ENCODE measurements at regions of chr2 and their contacts with region 1.

Region 1: DNA sequence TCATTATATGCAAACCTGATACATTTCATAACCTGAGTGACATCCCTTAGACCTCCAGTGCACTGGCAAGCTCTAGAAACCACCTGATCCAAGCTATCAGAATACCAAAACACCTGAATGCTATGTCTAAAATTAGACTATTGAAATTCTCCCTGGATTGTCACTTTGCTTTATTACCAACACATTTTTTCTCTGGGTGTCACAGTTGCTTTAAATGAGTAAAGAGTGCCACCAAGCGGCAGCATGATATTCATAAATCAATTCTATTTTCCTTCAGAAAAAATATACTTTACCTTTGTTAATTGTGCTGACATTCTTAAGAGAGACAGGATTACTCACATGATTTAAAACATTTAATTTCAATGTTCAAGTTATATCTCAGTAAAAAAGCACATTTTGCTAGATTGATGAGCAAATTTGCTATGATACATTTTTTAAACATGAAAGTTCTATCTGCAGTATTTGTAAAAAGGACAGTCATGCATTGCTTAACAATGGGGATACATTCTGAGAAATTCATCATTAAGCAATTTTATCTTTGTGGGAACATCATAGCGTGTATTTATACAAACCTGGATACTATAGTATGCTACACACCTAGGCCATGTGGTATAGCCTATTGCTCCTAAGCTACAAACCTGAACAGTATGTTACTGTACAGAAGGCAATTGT is 338.4 kb upstream of the SLC39A10 start:
- DNase-seq: peak; percentile 60
- ATAC-seq: peak; percentile 57
- H3K4me3 Mint-ChIP-seq: no peak overlapping the region
- H3K27ac Mint-ChIP-seq: no peak overlapping the region
- H3K4me1 Mint-ChIP-seq: peaks cover 10% of the 10 kb centered on the region
- H3K27me3 Mint-ChIP-seq: no peaks in the 10 kb centered on the region

Region 2: GRCh38 chr2:193695367-193695766 is 1623.2 kb before region 1 on chr2:
- CTCF ChIA-PET with region 1: no interaction called
- POLR2A ChIA-PET with region 1: no interaction called
- intact Hi-C with region 1: loop called in 1 of 2 experiments (anchors 10 kb)
- DNase-seq: no peak
- ATAC-seq: no peak
- H3K4me3 Mint-ChIP-seq: no peak overlapping the region
- H3K27ac Mint-ChIP-seq: no peak overlapping the region
- H3K4me1 Mint-ChIP-seq: no peaks in the 10 kb centered on the region
- H3K27me3 Mint-ChIP-seq: peaks cover 2% of the 10 kb centered on the region

Region 3: GRCh38 chr2:194545978-194546377 is 772.6 kb before region 1 on chr2:
- CTCF ChIA-PET with region 1: no interaction called
- POLR2A ChIA-PET with region 1: no interaction called
- intact Hi-C with region 1: loop called in 1 of 2 experiments (anchors 5 kb)
- DNase-seq: no peak
- ATAC-seq: no peak
- H3K4me3 Mint-ChIP-seq: no peak overlapping the region
- H3K27ac Mint-ChIP-seq: no peak overlapping the region
- H3K4me1 Mint-ChIP-seq: no peaks in the 10 kb centered on the region
- H3K27me3 Mint-ChIP-seq: no peaks in the 10 kb centered on the region

Region 4: GRCh38 chr2:195029804-195030654 is 288.5 kb before region 1 on chr2:
- CTCF ChIA-PET with region 1: no interaction called
- POLR2A ChIA-PET with region 1: no interaction called
- intact Hi-C with region 1: no loop called
- DNase-seq: no peak
- ATAC-seq: no peak
- H3K4me3 Mint-ChIP-seq: no peak overlapping the region
- H3K27ac Mint-ChIP-seq: no peak overlapping the region
- H3K4me1 Mint-ChIP-seq: no peaks in the 10 kb centered on the region
- H3K27me3 Mint-ChIP-seq: peaks cover 10% of the 10 kb centered on the region